Cardiac septum (tissue), 1 donor: ENCODE measurements at regions of chr10 and their contacts with region 1.

Region 1: GRCh38 chr10:11793762-11794479 is 29.2 kb upstream of the PROSER2 start:
- DNase-seq: no peak

Region 2: DNA sequence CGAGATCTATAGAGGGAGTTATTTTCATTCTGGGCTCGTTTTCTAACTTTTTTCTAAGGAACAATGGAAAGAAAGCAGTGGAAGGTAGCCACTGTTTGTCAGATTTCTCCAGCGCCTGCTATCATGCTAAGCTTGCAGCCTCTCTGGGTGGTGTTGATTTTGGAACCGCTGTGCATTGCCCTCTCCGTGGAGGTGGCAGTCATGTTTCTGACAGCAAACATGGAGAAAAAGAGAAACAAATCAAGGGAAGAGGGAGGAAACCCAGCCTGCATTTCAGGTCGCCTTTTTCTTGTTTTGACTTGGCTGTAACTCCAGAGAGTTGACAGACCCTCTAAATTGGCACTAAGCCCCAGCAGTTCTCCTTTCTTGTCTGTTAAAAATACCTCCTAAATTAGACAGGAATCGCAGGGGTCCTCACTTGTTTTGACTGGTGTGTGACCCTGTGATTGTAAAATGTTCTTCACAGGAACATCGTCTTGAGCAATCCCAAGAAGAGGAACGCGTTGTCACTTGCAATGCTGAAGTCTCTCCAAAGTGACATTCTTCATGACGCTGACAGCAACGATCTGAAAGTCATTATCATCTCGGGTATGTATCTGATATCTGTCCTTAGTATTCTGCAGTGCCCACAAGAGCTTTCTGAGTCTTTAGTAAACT is 46.9 kb before region 1 on chr10:
- intact Hi-C with region 1: no loop called
- DNase-seq: no peak

Region 3: GRCh38 chr10:11986593-11987216 is 192.8 kb after region 1 on chr10:
- intact Hi-C with region 1: loop called (anchors 5 kb)
- DNase-seq: peak; percentile 83